GM12878 (cell line): ENCODE measurements at regions of chr10 and their contacts with region 1.

Region 1: DNA sequence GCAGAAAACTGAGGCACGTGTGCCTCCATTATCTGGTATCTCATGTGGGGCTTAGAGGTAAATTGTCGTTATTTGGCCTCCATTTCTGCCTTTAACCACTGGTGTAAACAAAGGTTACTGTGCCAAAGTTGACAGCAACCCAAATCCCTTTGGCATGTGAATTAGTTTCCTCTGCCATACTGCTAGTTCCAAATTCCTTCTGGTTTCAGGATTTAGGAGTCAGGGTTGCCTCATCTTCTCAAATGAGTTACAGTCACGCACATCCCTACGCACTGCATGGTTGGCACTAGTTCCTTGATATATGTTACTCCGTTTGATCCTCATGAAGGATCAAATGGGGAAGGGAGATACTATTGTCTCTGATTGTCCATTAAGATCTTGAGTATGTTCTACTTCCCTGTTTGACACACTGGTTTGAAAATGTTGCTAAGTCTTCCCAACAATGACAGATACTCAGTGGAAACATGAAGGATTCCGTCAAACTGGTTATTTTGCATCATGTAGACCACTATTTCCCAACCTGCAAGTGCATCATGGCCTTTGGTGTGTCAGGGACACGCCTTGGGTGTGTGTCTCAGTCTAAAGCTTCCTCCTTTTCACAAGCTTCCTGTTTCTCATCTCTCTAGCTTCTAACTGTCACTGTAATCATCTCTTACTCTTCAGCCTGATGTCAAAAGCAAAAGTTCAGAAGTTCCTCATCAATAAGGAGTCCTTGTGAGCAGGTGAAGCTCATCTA is at the start of gene LIPN:
- DNase-seq: no peak
- ATAC-seq: no peak
- H3K4me3 ChIP-seq: no peak within 1 kb of the TSS
- H3K27ac ChIP-seq: no peak within 1 kb of the TSS
- H3K4me1 ChIP-seq: 0 out of 2 replicates have a peak, but pooled peaks cover 3% of the 10 kb centered on the region
- H3K27me3 ChIP-seq: no peaks in the 10 kb centered on the region
- CTCF ChIP-seq: no peak
- EP300 ChIP-seq: no peak
- POLR2A ChIP-seq: no peak
- RAD21 ChIP-seq: no peak
- polyA plus RNA-seq, gene LIPN: not detected

Region 2: DNA sequence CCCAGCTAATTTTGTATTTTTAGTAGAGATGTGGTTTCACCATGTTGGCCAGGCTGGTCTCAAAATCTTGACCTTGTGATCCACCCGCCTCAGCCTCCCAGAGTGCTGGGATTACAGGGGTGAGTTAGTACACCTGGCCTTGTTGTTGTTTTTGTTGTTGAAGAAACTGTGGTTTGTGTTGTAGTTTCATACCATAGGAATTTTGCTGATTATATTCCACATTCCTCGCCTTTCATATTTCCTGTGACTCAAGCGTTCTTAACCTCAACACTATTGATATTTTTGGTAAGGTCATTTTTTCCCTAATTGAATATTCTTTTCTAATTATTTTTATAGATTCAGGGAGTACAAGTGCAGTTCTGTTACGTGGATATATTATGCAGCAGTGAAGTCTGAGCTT is 78.6 kb before region 1 on chr10:
- CTCF ChIA-PET with region 1: no interaction called
- POLR2A ChIA-PET with region 1: no interaction called
- RAD21 ChIA-PET with region 1: no interaction called
- SMC1A ChIA-PET with region 1: no interaction called
- in situ Hi-C with region 1: no loop called
- intact Hi-C with region 1: no loop called
- DNase-seq: no peak
- ATAC-seq: no peak
- H3K4me3 ChIP-seq: no peak overlapping the region
- H3K27ac ChIP-seq: no peak overlapping the region
- H3K4me1 ChIP-seq: no peaks in the 10 kb centered on the region
- H3K27me3 ChIP-seq: no peaks in the 10 kb centered on the region
- CTCF ChIP-seq: no peak
- EP300 ChIP-seq: no peak
- POLR2A ChIP-seq: no peak
- RAD21 ChIP-seq: no peak

Region 3: GRCh38 chr10:88728107-88728763 is 31.3 kb before region 1 on chr10:
- CTCF ChIA-PET with region 1: interaction called, 14 read pairs
- POLR2A ChIA-PET with region 1: interaction called, 3 read pairs
- RAD21 ChIA-PET with region 1: interaction called, 10 read pairs
- SMC1A ChIA-PET with region 1: interaction called, 16 read pairs
- in situ Hi-C with region 1: no loop called
- intact Hi-C with region 1: no loop called
- DNase-seq: no peak
- ATAC-seq: peak; percentile 53
- H3K4me3 ChIP-seq: no peak overlapping the region
- H3K27ac ChIP-seq: no peak overlapping the region
- H3K4me1 ChIP-seq: peaks cover 3% of the 10 kb centered on the region
- H3K27me3 ChIP-seq: no peaks in the 10 kb centered on the region
- CTCF ChIP-seq: peak; percentile 39 to 65 (median 51); a peak in 5 of 6 replicates
- EP300 ChIP-seq: no peak
- POLR2A ChIP-seq: no peak
- RAD21 ChIP-seq: peak; percentile 79

Region 4: DNA sequence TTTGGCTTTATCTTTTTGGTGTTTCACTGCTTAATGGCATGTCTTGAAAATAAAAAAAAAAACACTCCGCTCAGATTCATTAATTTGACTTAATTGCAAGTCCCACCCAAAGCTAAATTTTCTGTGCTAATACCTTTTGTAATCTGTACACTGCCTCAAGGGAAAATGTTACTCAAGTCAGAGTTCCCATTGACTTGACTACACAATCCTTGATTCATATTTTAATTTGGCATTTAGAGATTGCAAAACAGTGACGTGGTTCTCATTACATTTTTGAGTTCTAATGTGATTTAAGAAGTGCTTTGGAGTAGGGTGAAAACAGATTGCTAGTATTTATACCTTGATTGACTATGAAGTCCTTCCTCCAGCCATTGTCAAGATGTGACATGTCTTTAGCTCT is 21.7 kb after region 1 on chr10:
- CTCF ChIA-PET with region 1: no interaction called
- POLR2A ChIA-PET with region 1: no interaction called
- RAD21 ChIA-PET with region 1: no interaction called
- SMC1A ChIA-PET with region 1: interaction called, 20 read pairs
- in situ Hi-C with region 1: no loop called
- intact Hi-C with region 1: no loop called
- DNase-seq: no peak
- ATAC-seq: no peak
- H3K4me3 ChIP-seq: no peak overlapping the region
- H3K27ac ChIP-seq: no peak overlapping the region
- H3K4me1 ChIP-seq: no peaks in the 10 kb centered on the region
- H3K27me3 ChIP-seq: no peaks in the 10 kb centered on the region; a peak in 1 of 4 replicates
- CTCF ChIP-seq: no peak
- EP300 ChIP-seq: no peak
- POLR2A ChIP-seq: no peak
- RAD21 ChIP-seq: no peak

Region 5: DNA sequence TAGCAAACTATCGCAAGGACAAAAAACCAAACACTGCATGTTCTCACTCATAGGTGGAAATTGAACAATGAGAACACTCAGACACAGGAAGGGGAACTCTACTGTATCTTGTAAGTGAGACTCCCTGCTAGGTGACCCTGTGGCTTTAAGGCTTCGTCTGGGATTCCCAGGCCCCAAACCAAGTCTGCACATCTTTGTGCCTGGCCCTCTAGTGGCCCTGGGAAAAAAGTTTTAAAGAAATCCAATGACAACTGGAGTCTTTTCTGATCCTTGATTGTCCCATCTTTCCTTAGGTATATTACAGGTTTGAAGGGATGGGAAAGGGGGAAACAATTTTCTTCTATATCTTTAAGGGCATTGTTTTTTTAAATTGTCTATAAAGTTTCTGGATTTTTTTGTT is 32.4 kb after region 1 on chr10:
- CTCF ChIA-PET with region 1: interaction called, 3 read pairs
- POLR2A ChIA-PET with region 1: no interaction called
- RAD21 ChIA-PET with region 1: interaction called, 4 read pairs
- SMC1A ChIA-PET with region 1: interaction called, 3 read pairs
- in situ Hi-C with region 1: no loop called
- intact Hi-C with region 1: loop called (anchors 5 kb)
- DNase-seq: peak; percentile 17
- ATAC-seq: peak; percentile 91
- H3K4me3 ChIP-seq: no peak overlapping the region
- H3K27ac ChIP-seq: no peak overlapping the region
- H3K4me1 ChIP-seq: peaks cover 7% of the 10 kb centered on the region; the same call in 1 of the 2 replicates
- H3K27me3 ChIP-seq: no peaks in the 10 kb centered on the region
- CTCF ChIP-seq: peak; percentile 44 to 57 (median 52)
- EP300 ChIP-seq: no peak
- POLR2A ChIP-seq: no peak
- RAD21 ChIP-seq: peak; percentile 56